BJ (cell line): ENCODE measurements at regions of chr20 and their contacts with region 1.

Region 1: GRCh38 chr20:34190679-34191090 is 50.5 kb upstream of the ASIP start:
- DNase-seq: peak; percentile 47
- H3K4me3 ChIP-seq: no peak overlapping the region
- H3K27me3 ChIP-seq: peaks cover 3% of the 10 kb centered on the region; the same call in 1 of the 2 replicates
- CTCF ChIP-seq: peak; percentile 89

Region 2: GRCh38 chr20:34180460-34181120 is 10.1 kb before region 1 on chr20:
- CTCF ChIA-PET with region 1: interaction called, 17 read pairs
- POLR2A ChIA-PET with region 1: no interaction called
- DNase-seq: no peak
- H3K4me3 ChIP-seq: no peak overlapping the region
- H3K27me3 ChIP-seq: peaks cover 2% of the 10 kb centered on the region; the same call in 1 of the 2 replicates
- CTCF ChIP-seq: no peak

Region 3: GRCh38 chr20:34215711-34216381 is 25.2 kb after region 1 on chr20:
- CTCF ChIA-PET with region 1: interaction called, 19 read pairs
- POLR2A ChIA-PET with region 1: no interaction called
- DNase-seq: no peak
- H3K4me3 ChIP-seq: peak overlapping the region; percentile 50
- H3K27me3 ChIP-seq: no peaks in the 10 kb centered on the region
- CTCF ChIP-seq: no peak

Region 4: DNA sequence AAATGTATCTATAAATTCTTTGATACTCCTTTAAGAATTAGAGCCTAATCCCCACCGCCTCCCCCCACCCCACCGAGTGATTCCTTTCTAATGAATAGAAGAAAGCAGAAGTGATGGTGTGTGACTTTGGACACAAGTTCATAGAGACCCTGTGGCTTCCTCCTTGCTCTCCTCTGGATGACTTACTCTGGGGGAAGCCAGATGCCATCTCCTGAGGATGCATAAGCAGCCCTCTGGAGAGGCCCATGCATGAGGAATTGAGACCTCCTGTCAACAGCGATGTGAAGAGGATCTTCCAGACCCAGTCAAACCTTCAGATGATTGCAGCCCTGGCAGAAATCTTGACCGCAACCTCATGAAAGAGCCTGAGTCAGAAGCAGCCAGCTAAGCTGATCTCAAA is 91.4 kb after region 1 on chr20:
- CTCF ChIA-PET with region 1: interaction called, 15 read pairs
- POLR2A ChIA-PET with region 1: no interaction called
- DNase-seq: no peak
- H3K4me3 ChIP-seq: no peak overlapping the region
- H3K27me3 ChIP-seq: no peaks in the 10 kb centered on the region
- CTCF ChIP-seq: no peak

Region 5: GRCh38 chr20:34522969-34523871 is 332.5 kb after region 1 on chr20:
- CTCF ChIA-PET with region 1: interaction called, 10 read pairs
- POLR2A ChIA-PET with region 1: no interaction called
- DNase-seq: no peak
- H3K4me3 ChIP-seq: no peak overlapping the region
- H3K27me3 ChIP-seq: no peaks in the 10 kb centered on the region
- CTCF ChIP-seq: peak; percentile 63